CD8-positive, alpha-beta T cell (primary cell): ENCODE measurements at regions of chr1 and their contacts with region 1.

Region 1: GRCh38 chr1:180805316-180805715 is 107.4 kb upstream of the KIAA1614 start:
- DNase-seq: no peak
- ATAC-seq: no peak
- H3K4me3 ChIP-seq: no peak overlapping the region
- H3K4me3 Mint-ChIP-seq: no peak overlapping the region
- H3K27ac ChIP-seq: no peak overlapping the region
- H3K27ac Mint-ChIP-seq: no peak overlapping the region
- H3K4me1 ChIP-seq: no peaks in the 10 kb centered on the region
- H3K4me1 Mint-ChIP-seq: peaks cover 5% of the 10 kb centered on the region
- H3K27me3 ChIP-seq: no peaks in the 10 kb centered on the region
- H3K27me3 Mint-ChIP-seq: no peaks in the 10 kb centered on the region
- CTCF ChIP-seq: no peak

Region 2: DNA sequence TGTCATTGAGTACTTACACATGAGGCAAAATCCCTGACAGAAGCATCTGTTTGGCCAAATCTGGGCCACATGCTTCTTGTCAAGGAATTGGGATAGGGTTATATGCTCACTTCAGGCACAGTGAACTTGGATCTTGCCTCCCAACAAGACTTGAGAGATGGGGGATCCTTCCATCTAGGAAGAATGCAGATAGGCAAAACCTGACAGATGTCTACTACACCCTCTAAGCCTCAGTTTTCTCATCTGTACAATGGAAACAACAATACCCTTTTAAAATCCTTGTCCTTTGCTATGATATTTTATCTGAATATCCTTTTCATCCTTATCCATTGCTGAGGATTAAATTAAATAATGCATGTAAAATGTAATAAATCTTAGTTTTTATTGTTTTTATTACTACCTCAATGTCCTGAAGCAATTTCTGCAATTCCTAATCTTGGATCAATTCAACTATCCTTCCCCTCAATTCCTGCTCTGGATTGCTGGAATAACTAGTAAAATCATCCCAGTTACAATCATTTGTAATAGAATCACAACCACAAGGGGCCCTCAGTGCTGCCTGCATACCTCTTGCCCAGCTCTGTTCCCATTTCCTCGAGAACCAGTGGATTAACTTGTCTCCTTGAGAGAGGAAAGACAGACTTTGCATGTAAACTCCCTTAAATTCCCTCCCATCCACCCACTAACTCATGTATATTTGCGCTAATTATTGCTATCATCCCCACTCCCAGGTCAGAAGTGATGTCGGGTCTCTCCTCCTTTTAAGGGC is 181.6 kb before region 1 on chr1:
- CTCF ChIA-PET with region 1: no interaction called
- POLR2A ChIA-PET with region 1: no interaction called
- intact Hi-C with region 1: no loop called
- DNase-seq: no peak
- ATAC-seq: no peak
- H3K4me3 ChIP-seq: no peak overlapping the region
- H3K4me3 Mint-ChIP-seq: no peak overlapping the region
- H3K27ac ChIP-seq: no peak overlapping the region
- H3K27ac Mint-ChIP-seq: no peak overlapping the region
- H3K4me1 ChIP-seq: no peaks in the 10 kb centered on the region
- H3K4me1 Mint-ChIP-seq: no peaks in the 10 kb centered on the region
- H3K27me3 ChIP-seq: no peaks in the 10 kb centered on the region
- H3K27me3 Mint-ChIP-seq: peaks cover 19% of the 10 kb centered on the region
- CTCF ChIP-seq: no peak

Region 3: DNA sequence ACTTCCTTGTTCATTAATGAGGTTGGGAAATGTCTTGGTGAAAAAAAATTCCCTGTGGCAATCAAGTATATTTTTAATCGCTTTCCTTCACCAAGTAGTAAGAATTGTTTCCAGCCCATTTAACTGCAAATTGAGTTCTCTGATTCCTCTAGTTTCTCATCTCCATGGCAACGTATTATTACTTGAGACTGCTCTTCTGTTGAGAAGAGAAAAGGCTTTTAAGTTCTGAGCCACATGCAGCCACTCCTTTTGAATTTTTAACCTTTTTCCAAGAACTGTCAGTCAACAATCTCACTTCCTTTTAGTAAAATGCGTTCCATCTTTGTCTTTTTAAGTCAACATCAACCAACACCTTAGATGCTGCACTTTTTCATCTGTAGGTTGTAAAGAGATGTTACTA is 31.7 kb after region 1 on chr1:
- CTCF ChIA-PET with region 1: no interaction called
- POLR2A ChIA-PET with region 1: interaction called, 3 read pairs
- intact Hi-C with region 1: loop called in 1 of 2 experiments (anchors 1 kb)
- DNase-seq: peak in 1 of 9 experiments; percentile 5
- ATAC-seq: no peak
- H3K4me3 ChIP-seq: no peak overlapping the region
- H3K4me3 Mint-ChIP-seq: no peak overlapping the region
- H3K27ac ChIP-seq: no peak overlapping the region
- H3K27ac Mint-ChIP-seq: no peak overlapping the region
- H3K4me1 ChIP-seq: peaks cover 5% of the 10 kb centered on the region
- H3K4me1 Mint-ChIP-seq: peaks cover 14% of the 10 kb centered on the region
- H3K27me3 ChIP-seq: no peaks in the 10 kb centered on the region
- H3K27me3 Mint-ChIP-seq: no peaks in the 10 kb centered on the region
- CTCF ChIP-seq: no peak